Sciatic nerve (tissue), 2 donors: ENCODE measurements at regions of chr16 and their contacts with region 1.

Region 1: DNA sequence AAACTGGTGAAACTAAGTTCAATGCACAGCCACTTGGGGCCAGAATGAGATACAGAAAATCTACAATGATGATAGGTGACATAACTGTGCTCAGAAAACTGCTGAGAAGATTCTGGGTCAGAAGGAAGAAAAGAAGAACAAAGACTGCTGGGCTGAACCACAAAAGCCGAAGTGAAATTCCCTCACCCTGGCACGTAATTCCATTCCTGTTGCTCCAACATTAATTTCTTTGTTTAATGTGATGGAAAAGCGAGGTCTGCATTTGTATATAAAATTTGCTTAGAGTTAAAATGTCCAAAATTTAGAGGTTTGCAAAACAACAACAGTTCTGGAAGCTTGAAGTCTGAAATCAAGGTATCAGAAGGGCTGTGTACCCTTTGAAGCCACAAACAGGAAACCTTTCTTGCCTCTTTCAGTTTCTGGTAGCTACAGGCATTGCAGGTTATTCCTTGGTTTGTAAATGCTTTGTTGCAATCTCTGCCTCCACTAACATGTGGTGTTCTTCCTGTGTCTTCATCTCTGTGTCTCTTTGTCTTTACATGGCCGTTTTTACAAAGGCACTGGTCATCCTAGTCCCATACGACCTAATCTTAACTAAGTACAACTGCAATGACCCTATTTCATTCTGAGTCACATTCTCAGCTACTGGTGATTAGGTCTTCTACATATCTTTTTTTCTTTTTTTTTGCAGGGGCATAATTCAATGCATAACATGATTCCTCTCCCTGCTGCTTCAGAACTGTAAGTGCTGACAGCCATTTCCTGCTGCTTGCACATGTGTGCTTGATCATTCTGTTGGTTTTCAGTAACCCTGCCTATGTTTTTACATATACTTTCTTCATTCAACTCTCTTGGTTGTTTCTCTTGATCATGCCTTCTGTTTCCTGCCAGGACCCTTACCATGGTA is 603.0 kb upstream of the CDH8 start:
- DNase-seq: no peak
- ATAC-seq: no peak

Region 2: GRCh38 chr16:60811051-60811608 is 1828.1 kb before region 1 on chr16:
- intact Hi-C with region 1: loop called (anchors 5 kb)
- DNase-seq: no peak
- ATAC-seq: no peak

Region 3: DNA sequence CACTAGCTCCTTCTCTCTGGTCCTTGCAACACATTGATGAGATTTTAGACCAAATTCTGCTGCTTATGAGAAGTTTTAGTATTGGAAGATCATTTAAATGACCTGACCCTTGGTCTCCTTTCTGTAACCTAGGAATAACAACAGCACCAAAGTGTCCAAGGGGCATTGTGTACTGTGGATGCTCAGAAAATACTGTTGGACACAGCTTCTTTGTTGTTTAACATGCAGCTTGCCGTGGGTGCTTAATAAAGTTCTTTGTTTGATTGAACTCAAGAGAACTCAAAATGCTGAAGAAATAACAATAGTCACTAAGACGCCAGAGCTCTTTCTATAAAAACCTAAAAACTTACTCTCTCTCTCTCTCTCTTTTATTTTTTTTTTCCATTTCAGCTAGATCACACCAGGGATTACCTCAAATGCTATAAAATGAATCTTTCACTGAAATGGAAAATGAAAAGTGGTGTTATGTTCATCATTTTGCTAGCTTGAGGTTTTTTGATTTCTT is 54.1 kb before region 1 on chr16:
- intact Hi-C with region 1: no loop called
- DNase-seq: no peak
- ATAC-seq: peak; percentile 39

Region 4: DNA sequence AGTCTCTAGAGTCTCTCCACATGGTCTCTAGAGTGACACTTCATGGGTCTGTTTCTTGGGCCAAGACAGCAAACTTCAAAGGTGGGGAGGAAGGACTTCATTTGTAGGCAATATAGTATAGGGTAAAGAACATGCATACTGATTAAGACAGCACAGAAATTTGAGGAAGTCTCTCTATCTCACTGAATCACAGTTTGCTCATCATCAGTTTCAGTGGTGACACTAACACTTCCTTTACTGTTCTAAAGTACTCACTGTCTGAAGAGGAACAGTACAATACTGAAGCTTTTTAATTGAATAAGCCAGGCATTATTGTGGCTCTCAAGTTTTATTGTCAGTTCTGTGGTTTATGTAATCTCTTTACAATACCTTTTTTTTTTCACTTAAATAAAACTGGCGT is 53.5 kb after region 1 on chr16:
- intact Hi-C with region 1: no loop called
- DNase-seq: no peak
- ATAC-seq: no peak